CD4-positive, alpha-beta T cell (primary cell): ENCODE measurements at regions of chrX and their contacts with region 1.

Region 1: DNA sequence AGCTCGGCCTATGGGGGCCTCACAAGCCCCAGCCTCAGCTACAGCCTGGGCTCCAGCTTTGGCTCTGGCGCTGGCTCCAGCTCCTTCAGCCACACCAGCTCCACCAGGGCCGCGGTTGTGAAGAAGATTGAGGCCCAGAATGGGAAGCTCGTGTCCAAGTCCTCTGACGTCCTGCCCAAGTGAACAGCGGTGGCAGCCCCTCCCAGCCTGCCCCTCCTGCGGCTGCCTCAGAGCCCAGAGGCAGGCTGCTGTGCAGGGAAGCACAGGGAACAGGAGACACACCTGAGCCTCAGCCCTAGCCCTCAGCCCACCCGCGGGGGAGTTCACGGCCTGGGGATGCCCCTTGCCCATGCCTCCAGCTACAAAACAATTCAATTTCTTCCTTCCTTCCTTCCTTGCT is 75.7 kb upstream of the ZXDA start:
- DNase-seq: no peak
- ATAC-seq: no peak
- H3K4me3 ChIP-seq: no peak overlapping the region
- H3K4me3 Mint-ChIP-seq: no peak overlapping the region
- H3K27ac ChIP-seq: no peak overlapping the region
- H3K27ac Mint-ChIP-seq: no peak overlapping the region
- H3K4me1 ChIP-seq: no peaks in the 10 kb centered on the region
- H3K4me1 Mint-ChIP-seq: no peaks in the 10 kb centered on the region
- H3K27me3 ChIP-seq: no peaks in the 10 kb centered on the region
- H3K27me3 Mint-ChIP-seq: no peaks in the 10 kb centered on the region
- CTCF ChIP-seq: no peak

Region 2: DNA sequence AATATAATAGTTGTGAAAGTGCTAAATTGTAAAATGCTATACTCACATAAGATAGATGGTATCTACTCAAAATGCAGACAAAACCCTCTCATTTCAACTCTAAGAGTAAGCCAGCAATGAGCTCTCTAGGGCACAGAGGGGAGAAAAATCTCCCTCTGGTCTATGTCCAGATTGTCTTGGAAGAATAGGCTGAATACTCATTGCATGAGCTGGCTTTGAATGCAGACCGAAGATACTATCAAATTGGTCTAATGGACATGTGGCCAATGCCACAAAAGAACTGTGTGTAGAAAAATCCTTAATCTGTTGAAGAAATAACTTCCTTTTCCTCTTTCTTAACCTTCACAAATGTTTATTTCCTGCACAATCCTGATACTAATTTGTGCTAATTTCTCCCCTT is 79.2 kb before region 1 on chrX:
- CTCF ChIA-PET with region 1: no interaction called
- POLR2A ChIA-PET with region 1: no interaction called
- intact Hi-C with region 1: no loop called
- DNase-seq: no peak
- ATAC-seq: no peak
- H3K4me3 ChIP-seq: no peak overlapping the region
- H3K4me3 Mint-ChIP-seq: peak overlapping the region; percentile 83
- H3K27ac ChIP-seq: no peak overlapping the region
- H3K27ac Mint-ChIP-seq: peak overlapping the region; percentile 16
- H3K4me1 ChIP-seq: peaks cover 23% of the 10 kb centered on the region
- H3K4me1 Mint-ChIP-seq: peaks cover 55% of the 10 kb centered on the region
- H3K27me3 ChIP-seq: no peaks in the 10 kb centered on the region
- H3K27me3 Mint-ChIP-seq: no peaks in the 10 kb centered on the region
- CTCF ChIP-seq: no peak

Region 3: DNA sequence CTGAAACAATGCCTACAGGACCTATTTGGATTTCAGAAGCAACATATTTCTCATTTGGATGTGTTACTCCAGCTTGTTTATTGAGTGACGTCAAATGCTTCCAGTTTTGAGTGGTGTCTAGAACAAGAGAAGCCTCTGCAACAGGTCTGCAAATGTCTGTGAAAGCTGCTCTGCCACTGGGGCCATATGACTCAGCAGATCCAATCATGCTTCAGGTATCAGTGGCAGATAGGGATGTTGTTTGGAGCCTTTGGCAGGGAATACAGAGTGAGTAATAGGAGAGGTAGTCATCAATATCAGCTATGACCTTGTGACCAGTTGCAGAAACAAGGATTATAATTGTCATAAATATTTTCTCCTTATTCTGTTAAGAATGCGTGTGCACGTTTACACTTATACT is 65.4 kb after region 1 on chrX:
- CTCF ChIA-PET with region 1: no interaction called
- POLR2A ChIA-PET with region 1: no interaction called
- intact Hi-C with region 1: loop called in 1 of 2 experiments (anchors 10 kb)
- DNase-seq: no peak
- ATAC-seq: no peak
- H3K4me3 ChIP-seq: no peak overlapping the region
- H3K4me3 Mint-ChIP-seq: no peak overlapping the region
- H3K27ac ChIP-seq: no peak overlapping the region
- H3K27ac Mint-ChIP-seq: no peak overlapping the region
- H3K4me1 ChIP-seq: no peaks in the 10 kb centered on the region
- H3K4me1 Mint-ChIP-seq: no peaks in the 10 kb centered on the region
- H3K27me3 ChIP-seq: no peaks in the 10 kb centered on the region
- H3K27me3 Mint-ChIP-seq: no peaks in the 10 kb centered on the region
- CTCF ChIP-seq: no peak